SK-N-SH (cell line): ENCODE measurements at regions of chr17 and their contacts with region 1.

Region 1: GRCh38 chr17:57892146-57892828 is 42.4 kb upstream of the MRPS23 start:
- DNase-seq: peak; percentile 92
- H3K4me3 ChIP-seq: peak overlapping the region in 1 of 2 experiments; percentile 21; a peak in 1 of 4 replicates
- H3K27ac ChIP-seq: peak overlapping the region; percentile 44 to 96
- H3K4me1 ChIP-seq: peaks cover 32 to 60% of the 10 kb centered on the region in 2 experiments
- H3K27me3 ChIP-seq: no peaks in the 10 kb centered on the region
- CTCF ChIP-seq: peak; percentile 100
- EP300 ChIP-seq: no peak
- RAD21 ChIP-seq: peak; percentile 91

Region 2: DNA sequence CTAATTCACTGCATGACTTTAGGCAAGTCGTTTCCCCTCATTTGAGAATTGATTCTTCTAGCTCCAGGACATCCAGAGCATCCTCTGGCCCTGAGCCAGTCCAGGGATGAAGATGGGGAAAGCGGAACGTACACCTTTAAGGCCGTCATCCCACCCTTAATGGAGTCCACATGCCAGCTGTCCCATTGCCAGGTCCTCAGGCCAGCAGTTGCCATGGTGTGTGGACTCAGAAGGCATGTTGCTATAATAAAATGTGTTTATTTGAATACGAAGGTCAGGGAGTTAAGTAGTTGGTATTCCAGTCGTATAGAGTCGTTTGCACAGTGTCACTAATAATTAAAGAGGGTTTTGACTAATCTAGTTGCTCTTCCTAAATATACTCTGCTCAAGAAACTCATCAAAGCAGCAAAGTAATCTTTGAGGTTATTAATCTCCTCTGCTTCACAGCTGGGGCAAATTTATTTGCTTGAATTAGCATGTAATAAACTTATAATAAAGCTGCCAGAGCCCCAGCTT is 177.6 kb before region 1 on chr17:
- CTCF ChIA-PET with region 1: no interaction called
- POLR2A ChIA-PET with region 1: no interaction called
- DNase-seq: peak; percentile 41
- H3K4me3 ChIP-seq: no peak overlapping the region
- H3K27ac ChIP-seq: no peak overlapping the region
- H3K4me1 ChIP-seq: peaks cover 0 to 14% of the 10 kb centered on the region in 2 experiments; a peak in 1 of 4 replicates
- H3K27me3 ChIP-seq: peaks cover 33% of the 10 kb centered on the region; the same call in 1 of the 2 replicates
- CTCF ChIP-seq: no peak
- EP300 ChIP-seq: no peak
- RAD21 ChIP-seq: no peak

Region 3: DNA sequence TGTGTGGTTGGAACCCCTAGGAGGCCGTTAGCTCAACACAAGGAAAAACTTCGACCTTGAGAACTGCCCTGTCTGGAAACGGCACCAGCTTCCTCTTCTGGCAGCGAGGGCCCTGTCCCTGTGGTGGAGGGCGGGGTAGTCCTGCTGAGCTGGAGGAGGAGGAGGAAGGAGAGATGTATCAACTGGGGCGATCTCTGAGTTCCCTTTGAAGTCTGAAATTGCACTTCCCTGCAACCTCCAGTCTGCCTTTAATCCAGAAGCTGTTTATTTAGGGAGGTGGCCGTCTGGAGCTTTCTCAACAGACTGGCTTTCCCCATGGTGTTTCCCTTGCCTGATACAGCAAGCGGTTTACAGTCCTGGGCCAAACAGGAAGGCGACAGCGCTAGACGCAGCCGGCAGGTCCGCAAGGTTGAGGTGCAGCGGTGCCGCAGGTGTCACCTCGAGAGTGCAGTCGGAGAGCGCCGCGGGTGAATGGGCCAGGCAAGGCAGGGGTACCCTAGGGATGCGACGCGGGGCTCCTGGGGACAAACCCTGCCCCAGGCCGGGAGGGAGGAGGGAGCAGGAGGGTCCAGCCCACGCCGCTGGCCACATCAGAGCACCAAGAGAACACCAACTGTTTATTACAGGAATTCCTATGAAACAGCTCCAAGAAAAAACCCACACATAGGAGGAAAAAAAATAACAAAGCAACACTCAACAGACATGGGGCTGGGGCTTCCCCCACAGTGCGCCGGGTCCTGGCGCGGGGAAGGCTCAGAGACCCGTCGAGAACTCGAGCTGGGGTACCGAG is 31.1 kb before region 1 on chr17:
- CTCF ChIA-PET with region 1: interaction called, 125 read pairs
- POLR2A ChIA-PET with region 1: no interaction called
- DNase-seq: peak; percentile 70
- H3K4me3 ChIP-seq: peak overlapping the region in 1 of 2 experiments; percentile 28; a peak in 1 of 4 replicates
- H3K27ac ChIP-seq: no peak overlapping the region; a peak in 1 of 4 replicates
- H3K4me1 ChIP-seq: peaks cover 14 to 22% of the 10 kb centered on the region in 2 experiments; a peak in 3 of 4 replicates
- H3K27me3 ChIP-seq: no peaks in the 10 kb centered on the region
- CTCF ChIP-seq: no peak
- EP300 ChIP-seq: no peak
- RAD21 ChIP-seq: no peak

Region 4: GRCh38 chr17:57902800-57903759 is 10.8 kb after region 1 on chr17:
- CTCF ChIA-PET with region 1: interaction called, 56 read pairs
- POLR2A ChIA-PET with region 1: interaction called, 7 read pairs
- DNase-seq: no peak
- H3K4me3 ChIP-seq: no peak overlapping the region
- H3K27ac ChIP-seq: peak overlapping the region; percentile 43 to 86
- H3K4me1 ChIP-seq: peaks cover 49 to 53% of the 10 kb centered on the region in 2 experiments; a peak in 3 of 4 replicates
- H3K27me3 ChIP-seq: no peaks in the 10 kb centered on the region
- CTCF ChIP-seq: no peak
- EP300 ChIP-seq: peak in 1 of 2 experiments; percentile 67; a peak in 1 of 4 replicates
- RAD21 ChIP-seq: no peak

Region 5: DNA sequence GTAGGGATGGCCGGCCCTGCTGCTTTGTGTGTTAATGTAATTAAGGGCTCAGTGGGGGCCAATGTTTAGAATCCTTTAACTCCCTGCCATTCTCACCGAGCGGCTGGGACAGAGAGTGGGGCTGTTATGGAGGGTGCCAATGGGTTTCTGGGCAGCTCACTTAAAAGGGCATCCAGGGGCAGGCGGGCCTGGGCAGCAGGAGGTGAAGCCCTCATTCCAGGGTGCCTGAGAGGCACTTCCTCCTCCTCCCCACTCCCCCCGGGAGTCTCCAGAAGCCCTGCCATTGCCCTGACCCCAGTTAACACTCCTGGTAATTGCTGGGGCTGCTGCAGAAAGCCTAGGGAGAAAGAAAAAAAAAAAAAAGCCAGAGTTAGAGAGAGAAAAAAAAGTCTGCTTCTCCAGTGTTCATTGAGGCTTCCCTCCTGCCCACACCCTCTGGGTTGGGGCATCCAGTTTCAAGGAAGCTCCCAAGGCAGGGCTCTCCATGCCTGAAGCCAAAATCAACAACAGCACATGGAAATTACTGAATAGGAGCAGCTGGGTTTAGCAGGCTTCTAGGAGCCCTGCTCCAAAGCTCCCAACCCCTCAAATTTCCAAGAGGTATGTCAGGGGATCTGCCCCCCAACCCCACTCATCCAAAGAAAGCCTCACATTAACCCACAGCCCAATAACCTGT is 34.9 kb after region 1 on chr17:
- CTCF ChIA-PET with region 1: interaction called, 10 read pairs
- POLR2A ChIA-PET with region 1: interaction called, 4 read pairs
- DNase-seq: peak; percentile 45
- H3K4me3 ChIP-seq: no peak overlapping the region
- H3K27ac ChIP-seq: peak overlapping the region; percentile 7 to 47; a peak in 1 of 4 replicates
- H3K4me1 ChIP-seq: peaks cover 22 to 24% of the 10 kb centered on the region in 2 experiments; a peak in 3 of 4 replicates
- H3K27me3 ChIP-seq: no peaks in the 10 kb centered on the region
- CTCF ChIP-seq: no peak
- EP300 ChIP-seq: no peak
- RAD21 ChIP-seq: no peak

Region 6: DNA sequence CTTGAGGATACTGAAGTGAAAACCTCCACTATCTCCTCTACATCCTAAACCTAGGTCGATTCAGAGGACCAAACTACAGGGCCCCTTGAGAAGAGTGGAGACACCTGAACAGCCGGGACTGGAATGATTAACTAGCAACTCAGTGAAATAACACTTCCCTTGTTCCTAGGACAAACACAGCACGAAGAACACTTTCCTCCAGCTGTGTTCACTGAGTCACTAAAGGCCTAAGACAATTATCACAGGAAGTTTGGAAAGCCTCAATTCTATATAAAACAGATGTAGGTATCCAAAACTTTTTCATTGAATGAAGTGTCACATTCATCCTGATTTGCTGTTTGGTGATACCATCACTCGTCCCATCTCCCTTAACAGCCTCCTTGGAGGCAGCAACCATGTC is 78.4 kb after region 1 on chr17:
- CTCF ChIA-PET with region 1: interaction called, 13 read pairs
- POLR2A ChIA-PET with region 1: no interaction called
- DNase-seq: no peak
- H3K4me3 ChIP-seq: no peak overlapping the region
- H3K27ac ChIP-seq: peak overlapping the region; percentile 26 to 42; a peak in 2 of 4 replicates
- H3K4me1 ChIP-seq: peaks cover 13 to 25% of the 10 kb centered on the region in 2 experiments; a peak in 2 of 4 replicates
- H3K27me3 ChIP-seq: no peaks in the 10 kb centered on the region
- CTCF ChIP-seq: no peak
- EP300 ChIP-seq: no peak; a peak in 1 of 4 replicates
- RAD21 ChIP-seq: no peak

Region 7: GRCh38 chr17:58112970-58113631 is 220.8 kb after region 1 on chr17:
- CTCF ChIA-PET with region 1: interaction called, 14 read pairs
- POLR2A ChIA-PET with region 1: no interaction called
- DNase-seq: peak; percentile 79
- H3K4me3 ChIP-seq: no peak overlapping the region
- H3K27ac ChIP-seq: no peak overlapping the region
- H3K4me1 ChIP-seq: no peaks in the 10 kb centered on the region
- H3K27me3 ChIP-seq: 0 out of 2 replicates have a peak, but pooled peaks cover 18% of the 10 kb centered on the region
- CTCF ChIP-seq: peak; percentile 99
- EP300 ChIP-seq: no peak
- RAD21 ChIP-seq: peak; percentile 99